ENCODE measurements at regions of chr19 and their contacts with region 1.

Region 1: DNA sequence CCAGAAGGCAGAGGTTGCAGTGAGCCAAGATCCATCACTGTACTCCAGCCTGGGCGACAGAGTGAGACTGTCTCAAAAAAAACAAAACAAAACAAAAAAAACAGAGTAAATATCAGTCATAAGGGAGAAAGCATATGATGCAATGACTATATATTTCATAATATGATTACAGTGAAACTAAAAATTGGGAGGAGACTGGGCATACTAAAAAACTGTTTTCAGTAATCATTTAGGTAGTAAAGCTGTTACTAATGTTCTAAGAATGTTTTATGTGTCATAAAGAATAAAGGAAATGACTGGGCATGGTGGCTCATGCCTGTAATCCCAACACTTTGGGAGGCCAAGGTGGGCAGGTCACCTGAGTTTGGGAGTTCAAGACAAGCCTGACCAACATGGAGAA is 15.9 kb downstream of the ZNF573 start:
- DNase-seq: no peak

Region 2: GRCh38 chr19:37779127-37780005 is 15.9 kb after region 1 on chr19 and contains the start of gene ZNF573:
- CTCF ChIA-PET with region 1: no interaction called
- POLR2A ChIA-PET with region 1: interaction called, 11 read pairs
- DNase-seq: peak; percentile 82